Mammary epithelial cell (primary cell): ENCODE measurements at regions of chr12 and their contacts with region 1.

Region 1: GRCh38 chr12:46661110-46661845 is 164.5 kb downstream of the SLC38A4 start:
- DNase-seq: peak; percentile 75
- H3K4me3 ChIP-seq: no peak overlapping the region
- H3K27ac ChIP-seq: peak overlapping the region; percentile 64
- H3K4me1 ChIP-seq: peaks cover 55% of the 10 kb centered on the region
- H3K27me3 ChIP-seq: no peaks in the 10 kb centered on the region
- CTCF ChIP-seq: peak; percentile 80 to 86

Region 2: GRCh38 chr12:46372544-46373110 is 288.7 kb before region 1 on chr12 and contains the start of gene SLC38A2:
- CTCF ChIA-PET with region 1: no interaction called
- dilution Hi-C with region 1: no loop called
- in situ Hi-C with region 1: no loop called
- intact Hi-C with region 1: loop called (anchors 1 kb)
- DNase-seq: peak; percentile 91
- H3K4me3 ChIP-seq: peak within 1 kb of the TSS; percentile 91 to 95 (median 92)
- H3K27ac ChIP-seq: peak within 1 kb of the TSS; percentile 98
- H3K4me1 ChIP-seq: peaks cover 27% of the 10 kb centered on the region
- H3K27me3 ChIP-seq: no peaks in the 10 kb centered on the region
- CTCF ChIP-seq: no peak
- total RNA-seq, gene SLC38A2: 774 to 995 TPM

Region 3: DNA sequence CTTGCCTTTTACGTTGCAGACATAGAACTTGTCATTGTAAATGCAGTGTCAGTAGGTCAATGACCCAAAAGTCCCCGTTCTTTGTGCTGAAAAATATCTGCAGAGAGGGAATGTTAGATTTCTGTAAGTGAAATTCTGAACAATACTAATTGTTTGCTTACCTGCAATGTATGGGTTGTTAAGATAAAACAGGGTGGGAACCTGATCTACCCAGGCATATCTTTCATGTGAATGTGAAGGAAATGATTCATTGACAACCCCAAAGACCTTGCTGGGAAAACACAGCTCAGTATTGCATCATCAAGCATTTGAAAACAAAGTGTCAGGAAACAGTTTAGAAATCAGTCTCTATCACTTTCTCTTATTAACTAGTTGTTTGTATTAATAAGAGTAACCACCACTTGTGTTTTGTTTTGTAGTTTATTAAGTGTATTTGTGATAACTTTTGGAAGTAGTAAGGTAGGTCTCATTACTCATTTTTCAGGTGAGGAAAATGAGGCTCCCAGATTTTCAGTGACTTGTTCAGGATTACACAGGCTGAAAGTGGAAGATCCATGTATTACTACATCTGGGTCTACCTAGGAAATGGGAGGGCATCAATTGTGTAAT is 230.8 kb before region 1 on chr12:
- CTCF ChIA-PET with region 1: interaction called, 3 read pairs
- dilution Hi-C with region 1: no loop called
- in situ Hi-C with region 1: no loop called
- intact Hi-C with region 1: loop called (anchors 1 kb)
- DNase-seq: peak; percentile 92
- H3K4me3 ChIP-seq: peak overlapping the region in 1 of 3 experiments; percentile 23
- H3K27ac ChIP-seq: peak overlapping the region; percentile 100
- H3K4me1 ChIP-seq: peaks cover 35% of the 10 kb centered on the region
- H3K27me3 ChIP-seq: no peaks in the 10 kb centered on the region
- CTCF ChIP-seq: no peak

Region 4: DNA sequence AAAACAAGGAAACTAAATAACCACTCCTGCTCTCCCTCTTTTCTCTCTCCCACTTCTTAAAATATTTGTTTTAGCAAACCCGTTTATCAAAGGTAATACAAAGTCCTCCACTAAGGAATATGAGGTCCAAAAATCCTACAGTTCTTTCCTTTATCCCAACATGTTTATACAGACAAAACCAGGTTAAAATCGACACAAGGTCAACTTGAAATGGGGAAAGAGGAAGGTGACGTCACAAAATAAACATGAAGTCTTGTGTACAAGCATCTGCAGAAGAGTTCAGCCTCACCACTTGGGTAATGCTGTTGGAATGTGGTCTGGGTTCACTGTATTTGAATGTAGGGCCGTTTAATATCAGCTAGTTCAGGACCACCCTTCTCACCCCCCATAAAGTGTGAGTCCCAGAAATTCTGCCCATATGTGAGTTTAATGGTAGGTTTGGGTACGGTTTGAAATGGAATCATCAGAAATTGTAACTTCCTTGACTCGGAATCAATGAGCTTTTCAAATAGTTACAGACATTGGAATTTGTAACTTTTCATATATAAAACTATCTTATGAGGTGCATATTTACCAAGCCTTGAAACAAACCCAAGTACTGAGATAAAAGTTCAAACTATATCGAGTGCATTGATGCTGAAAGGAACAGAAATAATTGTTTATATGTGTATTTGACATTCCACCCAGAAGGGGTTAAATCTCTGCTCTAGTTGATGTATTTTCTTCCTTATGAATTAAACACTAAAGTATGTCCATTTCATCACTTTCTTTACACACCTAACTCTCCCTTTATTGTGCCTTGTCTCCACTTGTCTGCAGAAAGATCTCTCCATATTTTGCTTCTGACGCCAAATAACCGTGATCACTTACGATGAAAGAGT is 168.6 kb before region 1 on chr12:
- CTCF ChIA-PET with region 1: no interaction called
- dilution Hi-C with region 1: no loop called
- in situ Hi-C with region 1: no loop called
- intact Hi-C with region 1: loop called (anchors 2 kb)
- DNase-seq: peak; percentile 85
- H3K4me3 ChIP-seq: no peak overlapping the region
- H3K27ac ChIP-seq: peak overlapping the region; percentile 94
- H3K4me1 ChIP-seq: peaks cover 56% of the 10 kb centered on the region
- H3K27me3 ChIP-seq: no peaks in the 10 kb centered on the region
- CTCF ChIP-seq: peak; percentile 12 to 17

Region 5: GRCh38 chr12:46556105-46556559 is 105.1 kb before region 1 on chr12:
- CTCF ChIA-PET with region 1: interaction called, 4 read pairs
- dilution Hi-C with region 1: no loop called
- in situ Hi-C with region 1: loop called (anchors 5 to 10 kb)
- intact Hi-C with region 1: loop called (anchors 2 kb)
- DNase-seq: peak; percentile 89
- H3K4me3 ChIP-seq: no peak overlapping the region
- H3K27ac ChIP-seq: peak overlapping the region; percentile 99
- H3K4me1 ChIP-seq: peaks cover 84% of the 10 kb centered on the region
- H3K27me3 ChIP-seq: no peaks in the 10 kb centered on the region
- CTCF ChIP-seq: no peak

Region 6: GRCh38 chr12:46635818-46636217 is 25.5 kb before region 1 on chr12:
- CTCF ChIA-PET with region 1: no interaction called
- dilution Hi-C with region 1: no loop called
- in situ Hi-C with region 1: no loop called
- intact Hi-C with region 1: no loop called
- DNase-seq: no peak
- H3K4me3 ChIP-seq: no peak overlapping the region
- H3K27ac ChIP-seq: no peak overlapping the region
- H3K4me1 ChIP-seq: no peaks in the 10 kb centered on the region
- H3K27me3 ChIP-seq: no peaks in the 10 kb centered on the region
- CTCF ChIP-seq: no peak

Region 7: GRCh38 chr12:46752396-46752795 is 91.1 kb after region 1 on chr12:
- CTCF ChIA-PET with region 1: no interaction called
- dilution Hi-C with region 1: no loop called
- in situ Hi-C with region 1: no loop called
- intact Hi-C with region 1: no loop called
- DNase-seq: peak; percentile 60
- H3K4me3 ChIP-seq: no peak overlapping the region
- H3K27ac ChIP-seq: no peak overlapping the region
- H3K4me1 ChIP-seq: peaks cover 2% of the 10 kb centered on the region
- H3K27me3 ChIP-seq: no peaks in the 10 kb centered on the region
- CTCF ChIP-seq: no peak